GM12878 (cell line): ENCODE measurements at regions of chr11 and their contacts with region 1.

Region 1: GRCh38 chr11:102346748-102347461 is at the start of gene BIRC2:
- DNase-seq: peak; percentile 67
- ATAC-seq: peak; percentile 86
- H3K4me3 ChIP-seq: peak within 1 kb of the TSS; percentile 77
- H3K27ac ChIP-seq: peak within 1 kb of the TSS; percentile 96
- H3K4me1 ChIP-seq: no peaks in the 10 kb centered on the region
- H3K27me3 ChIP-seq: no peaks in the 10 kb centered on the region
- CTCF ChIP-seq: peak; percentile 71 to 90 (median 80)
- EP300 ChIP-seq: peak; percentile 65 to 78; a peak in 3 of 4 replicates
- POLR2A ChIP-seq: peak; percentile 92
- RAD21 ChIP-seq: no peak; the same call in 1 of the 2 replicates
- polyA plus RNA-seq, gene BIRC2: 13.8 to 17.8 TPM

Region 2: DNA sequence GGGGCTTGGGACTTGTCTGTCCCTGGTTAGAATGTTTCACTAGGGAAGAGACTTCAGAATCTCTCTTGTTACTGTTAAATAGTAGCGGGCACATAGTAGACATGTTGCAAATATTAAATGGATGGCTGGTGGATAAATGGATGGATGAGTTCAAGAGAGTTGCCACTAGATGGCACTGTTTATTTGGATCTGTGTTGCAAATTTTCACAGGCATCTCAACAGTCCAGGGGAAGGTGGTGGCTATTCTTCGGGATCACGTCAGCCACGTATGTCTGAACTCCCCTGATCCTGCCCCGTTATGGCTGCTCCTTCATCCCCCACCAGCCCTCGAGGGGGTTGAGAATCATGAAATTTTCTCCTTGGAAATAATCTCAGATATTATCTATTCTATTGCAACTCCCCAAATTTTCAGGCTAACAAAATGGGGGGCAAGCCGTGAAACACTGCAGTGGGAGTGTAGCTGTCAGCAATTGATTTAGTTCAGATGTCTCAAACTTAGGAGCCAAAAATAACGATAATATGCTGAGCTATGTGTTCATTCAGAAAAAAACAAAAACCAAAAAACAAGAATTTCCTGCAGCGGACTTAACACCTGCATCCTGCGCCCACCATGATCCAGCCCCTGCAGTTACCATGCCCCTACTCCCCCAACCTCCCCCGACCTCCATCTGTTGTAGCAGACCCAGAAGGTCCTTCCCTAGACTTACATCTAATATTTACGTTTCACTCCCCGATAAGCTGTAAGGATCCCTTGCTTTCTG is 58.8 kb before region 1 on chr11:
- CTCF ChIA-PET with region 1: interaction called, 234 read pairs
- POLR2A ChIA-PET with region 1: interaction called, 3 read pairs
- RAD21 ChIA-PET with region 1: interaction called, 54 read pairs
- SMC1A ChIA-PET with region 1: interaction called, 46 read pairs
- in situ Hi-C with region 1: loop called (anchors 5 kb)
- intact Hi-C with region 1: no loop called
- DNase-seq: peak; percentile 78
- ATAC-seq: peak; percentile 94
- H3K4me3 ChIP-seq: peak overlapping the region; percentile 43; the same call in 1 of the 2 replicates
- H3K27ac ChIP-seq: no peak overlapping the region
- H3K4me1 ChIP-seq: no peaks in the 10 kb centered on the region
- H3K27me3 ChIP-seq: no peaks in the 10 kb centered on the region
- CTCF ChIP-seq: peak; percentile 62 to 83 (median 67)
- EP300 ChIP-seq: no peak
- POLR2A ChIP-seq: no peak
- RAD21 ChIP-seq: peak; percentile 84

Region 3: DNA sequence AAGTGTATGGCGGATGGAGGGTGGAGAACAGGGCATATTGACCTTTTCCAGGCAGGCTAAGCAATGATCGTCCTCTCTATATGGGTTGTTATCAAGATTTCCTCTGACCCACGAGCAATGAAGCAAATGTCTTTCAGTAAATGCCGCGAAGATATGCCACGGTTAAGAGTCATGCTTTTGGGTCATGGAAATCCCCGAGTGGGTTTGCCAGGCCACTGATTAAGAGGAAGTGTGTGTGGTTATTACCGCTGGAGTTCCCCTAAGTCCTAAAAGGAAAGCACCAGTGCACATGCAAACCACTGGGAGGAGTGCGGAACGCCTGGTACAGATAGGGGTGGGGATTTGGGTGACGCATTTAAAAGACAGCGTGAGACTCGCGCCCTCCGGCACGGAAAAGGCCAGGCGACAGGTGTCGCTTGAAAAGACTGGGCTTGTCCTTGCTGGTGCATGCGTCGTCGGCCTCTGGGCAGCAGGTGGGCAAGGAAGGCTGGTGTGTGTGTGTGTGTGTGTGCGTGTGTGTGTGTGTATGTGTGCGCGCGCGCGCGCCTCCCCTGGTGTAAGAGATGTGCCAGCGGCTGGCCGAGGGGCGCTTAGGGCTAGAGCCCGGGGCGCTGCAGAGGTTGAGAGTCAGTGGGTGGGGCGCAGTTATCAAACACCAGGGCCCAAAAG is 29.7 kb before region 1 on chr11 and contains the start of gene BIRC3:
- CTCF ChIA-PET with region 1: interaction called, 27 read pairs
- POLR2A ChIA-PET with region 1: interaction called, 4 read pairs
- RAD21 ChIA-PET with region 1: interaction called, 10 read pairs
- SMC1A ChIA-PET with region 1: interaction called, 22 read pairs
- in situ Hi-C with region 1: no loop called
- intact Hi-C with region 1: loop called (anchors 1 kb)
- DNase-seq: peak; percentile 100
- ATAC-seq: peak; percentile 75
- H3K4me3 ChIP-seq: peak within 1 kb of the TSS; percentile 76
- H3K27ac ChIP-seq: peak within 1 kb of the TSS; percentile 97
- H3K4me1 ChIP-seq: peaks cover 24% of the 10 kb centered on the region
- H3K27me3 ChIP-seq: no peaks in the 10 kb centered on the region
- CTCF ChIP-seq: peak in 2 of 3 experiments; percentile 14 to 20; a peak in 2 of 6 replicates
- EP300 ChIP-seq: peak; percentile 99
- POLR2A ChIP-seq: peak; percentile 99
- RAD21 ChIP-seq: no peak
- polyA plus RNA-seq, gene BIRC3: 63.8 to 92.9 TPM

Region 4: DNA sequence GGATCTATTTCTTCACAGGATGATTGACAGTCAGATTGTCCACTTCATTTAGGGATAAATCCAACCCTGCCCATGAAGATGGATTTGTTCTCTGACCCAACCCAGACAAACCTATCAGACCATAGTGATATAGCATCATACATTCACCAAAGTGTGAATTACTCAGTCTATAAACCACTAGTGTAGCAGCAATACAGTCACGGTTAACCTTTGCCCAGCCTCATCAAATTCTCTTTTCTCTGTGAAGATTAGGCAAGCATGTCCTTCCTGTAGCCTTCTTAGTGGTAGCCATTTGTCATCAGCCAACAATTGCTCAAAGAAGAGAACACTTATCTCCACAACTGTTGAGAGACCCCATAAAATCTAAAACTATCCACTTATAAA is 14.3 kb before region 1 on chr11:
- CTCF ChIA-PET with region 1: interaction called, 23 read pairs
- POLR2A ChIA-PET with region 1: no interaction called
- RAD21 ChIA-PET with region 1: interaction called, 4 read pairs
- SMC1A ChIA-PET with region 1: interaction called, 10 read pairs
- in situ Hi-C with region 1: no loop called
- intact Hi-C with region 1: no loop called
- DNase-seq: no peak
- ATAC-seq: peak; percentile 32
- H3K4me3 ChIP-seq: no peak overlapping the region
- H3K27ac ChIP-seq: no peak overlapping the region
- H3K4me1 ChIP-seq: no peaks in the 10 kb centered on the region; the same call in 1 of the 2 replicates
- H3K27me3 ChIP-seq: no peaks in the 10 kb centered on the region
- CTCF ChIP-seq: no peak
- EP300 ChIP-seq: no peak
- POLR2A ChIP-seq: 0 out of 2 replicates have a peak, but pooled peaks have one; percentile 2
- RAD21 ChIP-seq: no peak

Region 5: GRCh38 chr11:102367364-102367763 is 20.5 kb after region 1 on chr11:
- CTCF ChIA-PET with region 1: interaction called, 18 read pairs
- POLR2A ChIA-PET with region 1: interaction called, 4 read pairs
- RAD21 ChIA-PET with region 1: interaction called, 22 read pairs
- SMC1A ChIA-PET with region 1: interaction called, 51 read pairs
- in situ Hi-C with region 1: no loop called
- intact Hi-C with region 1: no loop called
- DNase-seq: no peak
- ATAC-seq: peak; percentile 58
- H3K4me3 ChIP-seq: no peak overlapping the region
- H3K27ac ChIP-seq: no peak overlapping the region
- H3K4me1 ChIP-seq: peaks cover 11% of the 10 kb centered on the region; the same call in 1 of the 2 replicates
- H3K27me3 ChIP-seq: no peaks in the 10 kb centered on the region
- CTCF ChIP-seq: peak; percentile 2 to 25 (median 17); a peak in 2 of 6 replicates
- EP300 ChIP-seq: no peak
- POLR2A ChIP-seq: no peak
- RAD21 ChIP-seq: peak; percentile 40; the same call in 1 of the 2 replicates

Region 6: DNA sequence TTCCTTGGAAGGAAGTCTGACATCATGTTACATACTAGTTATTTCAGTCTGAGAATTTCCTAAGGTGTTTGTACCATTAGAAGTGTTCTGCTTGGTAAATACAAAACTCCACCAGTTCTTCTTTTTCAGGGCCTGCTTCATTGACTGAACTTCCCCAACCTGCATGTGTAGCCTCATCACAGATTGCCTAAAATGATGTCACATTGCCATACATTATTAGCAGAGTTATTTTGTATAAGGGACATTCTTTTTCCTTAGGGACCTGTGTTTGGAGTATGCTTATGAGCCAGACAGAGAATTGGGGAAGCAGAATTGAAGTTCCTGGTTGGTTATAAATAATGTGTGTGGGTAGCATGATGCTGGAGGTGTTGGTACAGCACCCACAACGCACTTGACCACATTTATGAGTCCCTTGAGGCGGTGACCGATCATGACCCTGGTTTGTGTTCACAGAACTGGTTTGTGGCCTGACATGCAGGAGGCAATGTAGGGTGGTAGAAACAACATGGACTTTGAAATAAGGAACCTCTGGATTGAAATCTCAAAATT is 200.1 kb after region 1 on chr11:
- CTCF ChIA-PET with region 1: interaction called, 8 read pairs
- POLR2A ChIA-PET with region 1: interaction called, 5 read pairs
- RAD21 ChIA-PET with region 1: interaction called, 10 read pairs
- SMC1A ChIA-PET with region 1: interaction called, 4 read pairs
- in situ Hi-C with region 1: no loop called
- intact Hi-C with region 1: loop called (anchors 1 kb)
- DNase-seq: peak; percentile 93
- ATAC-seq: peak; percentile 81
- H3K4me3 ChIP-seq: no peak overlapping the region
- H3K27ac ChIP-seq: peak overlapping the region; percentile 68; the same call in 1 of the 2 replicates
- H3K4me1 ChIP-seq: peaks cover 37% of the 10 kb centered on the region
- H3K27me3 ChIP-seq: no peaks in the 10 kb centered on the region
- CTCF ChIP-seq: peak in 1 of 3 experiments; percentile 3; a peak in 1 of 6 replicates
- EP300 ChIP-seq: peak; percentile 93 to 95; a peak in 3 of 4 replicates
- POLR2A ChIP-seq: no peak
- RAD21 ChIP-seq: peak; percentile 32; the same call in 1 of the 2 replicates